A549 (cell line): ENCODE measurements at regions of chr19 and their contacts with region 1.

Region 1: GRCh38 chr19:38335949-38336637 is 463 bp downstream of the CATSPERG start:
- DNase-seq: peak; percentile 99 to 100
- ATAC-seq: peak; percentile 82 to 92
- H3K4me3 ChIP-seq: peak overlapping the region; percentile 66
- H3K27ac ChIP-seq: peak overlapping the region; percentile 74 to 82
- H3K4me1 ChIP-seq: peaks cover 8% of the 10 kb centered on the region; the same call in 2 of the 3 replicates
- CTCF ChIP-seq: no peak
- EP300 ChIP-seq: no peak
- POLR2A ChIP-seq: no peak
- RAD21 ChIP-seq: no peak

Region 2: GRCh38 chr19:38224014-38224862 is 111.9 kb before region 1 on chr19 and contains the start of gene DPF1:
- CTCF ChIA-PET with region 1: interaction called, 1,052 read pairs
- POLR2A ChIA-PET with region 1: no interaction called
- DNase-seq: peak; percentile 92 to 100
- ATAC-seq: peak; percentile 79 to 93
- H3K4me3 ChIP-seq: peak within 1 kb of the TSS; percentile 48
- H3K27ac ChIP-seq: peak within 1 kb of the TSS; percentile 34 to 80
- H3K4me1 ChIP-seq: peaks cover 24% of the 10 kb centered on the region
- CTCF ChIP-seq: peak; percentile 42
- EP300 ChIP-seq: no peak
- POLR2A ChIP-seq: peak; percentile 23; the same call in 1 of the 2 replicates
- RAD21 ChIP-seq: peak; percentile 37 to 48; a peak in 4 of 5 replicates
- polyA plus RNA-seq, gene DPF1: 1.3 and 2.1 TPM in 2 replicates

Region 3: GRCh38 chr19:38263689-38264485 is 72.2 kb before region 1 on chr19:
- CTCF ChIA-PET with region 1: interaction called, 1,052 read pairs
- POLR2A ChIA-PET with region 1: no interaction called
- DNase-seq: peak; percentile 78 to 87
- ATAC-seq: peak; percentile 64 to 66
- H3K4me3 ChIP-seq: peak overlapping the region; percentile 67
- H3K27ac ChIP-seq: peak overlapping the region; percentile 89 to 91
- H3K4me1 ChIP-seq: peaks cover 51% of the 10 kb centered on the region
- CTCF ChIP-seq: no peak
- EP300 ChIP-seq: no peak; a peak in 1 of 5 replicates
- POLR2A ChIP-seq: no peak
- RAD21 ChIP-seq: no peak; a peak in 1 of 5 replicates

Region 4: DNA sequence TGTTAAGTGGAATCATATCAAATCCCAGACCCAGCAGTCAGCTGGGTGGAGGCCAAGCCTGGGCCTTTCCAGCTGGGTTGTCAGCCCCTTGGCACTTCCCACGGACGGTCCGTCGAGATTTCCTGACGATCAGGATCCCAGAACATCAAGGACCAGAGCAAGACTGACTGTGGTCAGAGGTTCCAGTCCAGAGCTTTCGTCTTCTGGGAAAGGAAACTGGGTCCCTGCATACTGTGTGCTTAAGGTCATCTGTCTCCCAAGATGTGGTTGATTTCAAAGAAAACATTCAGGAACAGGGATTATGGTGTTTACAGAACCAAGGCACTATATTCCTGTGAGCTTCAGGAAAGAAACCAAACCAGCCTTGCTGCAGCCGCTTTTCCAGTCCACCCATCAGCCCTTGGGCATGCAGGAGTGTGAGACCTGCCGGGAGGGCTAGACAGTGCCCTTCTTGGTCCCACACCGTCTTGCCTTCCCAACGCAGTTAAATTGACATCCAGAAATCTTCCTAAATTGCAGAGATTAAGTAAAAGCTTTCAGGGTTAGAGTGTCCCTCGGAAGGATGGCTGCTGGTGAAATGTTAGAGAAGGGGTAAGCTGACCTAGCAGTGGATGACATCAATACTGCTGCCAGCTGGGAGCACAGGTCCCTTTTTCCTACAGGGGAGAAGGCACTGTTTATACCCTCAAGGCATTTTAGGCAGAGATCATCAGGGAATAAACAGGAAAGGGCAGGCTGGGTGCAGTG is 37.1 kb before region 1 on chr19:
- CTCF ChIA-PET with region 1: interaction called, 76 read pairs
- POLR2A ChIA-PET with region 1: interaction called, 12 read pairs
- DNase-seq: no peak
- ATAC-seq: no peak
- H3K4me3 ChIP-seq: no peak overlapping the region
- H3K27ac ChIP-seq: peak overlapping the region; percentile 92 to 95
- H3K4me1 ChIP-seq: peaks cover 51% of the 10 kb centered on the region
- CTCF ChIP-seq: no peak
- EP300 ChIP-seq: no peak
- POLR2A ChIP-seq: no peak
- RAD21 ChIP-seq: no peak

Region 5: DNA sequence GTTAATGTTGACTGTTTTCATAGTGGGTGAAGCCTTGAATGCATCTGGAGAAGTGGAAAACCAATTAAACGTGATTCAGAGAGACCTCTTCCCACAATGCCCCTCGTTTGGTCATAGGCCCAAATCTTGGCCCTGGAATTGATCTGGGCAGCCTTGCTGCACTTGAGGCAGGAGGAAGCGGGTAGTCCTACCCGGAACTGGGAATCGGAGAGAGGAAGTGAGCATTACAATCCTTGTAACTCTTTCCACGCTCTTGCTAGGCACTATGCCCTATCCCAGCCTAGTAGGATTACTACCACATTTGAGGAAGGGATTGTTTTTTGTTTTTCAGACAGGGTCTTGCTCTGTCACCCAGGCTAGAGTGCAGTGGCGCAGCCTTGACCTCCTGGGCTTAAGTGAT is 12.8 kb before region 1 on chr19:
- CTCF ChIA-PET with region 1: interaction called, 67 read pairs
- POLR2A ChIA-PET with region 1: no interaction called
- DNase-seq: no peak
- ATAC-seq: no peak
- H3K4me3 ChIP-seq: no peak overlapping the region
- H3K27ac ChIP-seq: no peak overlapping the region
- H3K4me1 ChIP-seq: 0 out of 3 replicates have a peak, but pooled peaks cover 3% of the 10 kb centered on the region
- CTCF ChIP-seq: no peak
- EP300 ChIP-seq: no peak
- POLR2A ChIP-seq: no peak
- RAD21 ChIP-seq: no peak

Region 6: DNA sequence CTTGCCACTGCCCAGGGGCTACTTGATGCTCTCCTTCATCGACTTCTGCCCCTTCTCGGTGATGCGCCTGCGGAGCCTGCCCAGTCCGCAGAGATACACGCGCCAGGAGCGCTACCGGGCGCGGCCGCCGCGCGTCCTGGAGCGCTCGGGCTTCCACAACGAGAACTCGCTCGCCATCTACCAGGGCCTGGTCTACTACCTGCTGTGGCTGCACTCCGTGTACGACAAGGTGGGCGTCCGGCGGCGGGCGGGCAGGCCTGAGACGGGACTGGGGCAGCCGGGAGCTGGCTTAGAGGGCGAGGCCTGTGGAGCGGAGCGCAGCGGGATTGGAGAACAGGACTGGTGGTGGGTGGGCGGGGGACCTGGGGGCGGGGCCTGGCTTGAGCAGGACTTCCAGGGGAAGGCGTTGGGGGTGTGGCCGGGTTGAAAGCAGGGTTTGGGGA is 25.6 kb after region 1 on chr19:
- CTCF ChIA-PET with region 1: interaction called, 29 read pairs
- POLR2A ChIA-PET with region 1: no interaction called
- DNase-seq: peak; percentile 96 to 99
- ATAC-seq: peak; percentile 81 to 93
- H3K4me3 ChIP-seq: peak overlapping the region; percentile 65
- H3K27ac ChIP-seq: peak overlapping the region; percentile 62 to 81
- H3K4me1 ChIP-seq: peaks cover 9% of the 10 kb centered on the region; the same call in 1 of the 3 replicates
- CTCF ChIP-seq: no peak
- EP300 ChIP-seq: no peak
- POLR2A ChIP-seq: no peak
- RAD21 ChIP-seq: no peak